CD8-positive, alpha-beta T cell (primary cell): ENCODE measurements at regions of chr4 and their contacts with region 1.

Region 1: DNA sequence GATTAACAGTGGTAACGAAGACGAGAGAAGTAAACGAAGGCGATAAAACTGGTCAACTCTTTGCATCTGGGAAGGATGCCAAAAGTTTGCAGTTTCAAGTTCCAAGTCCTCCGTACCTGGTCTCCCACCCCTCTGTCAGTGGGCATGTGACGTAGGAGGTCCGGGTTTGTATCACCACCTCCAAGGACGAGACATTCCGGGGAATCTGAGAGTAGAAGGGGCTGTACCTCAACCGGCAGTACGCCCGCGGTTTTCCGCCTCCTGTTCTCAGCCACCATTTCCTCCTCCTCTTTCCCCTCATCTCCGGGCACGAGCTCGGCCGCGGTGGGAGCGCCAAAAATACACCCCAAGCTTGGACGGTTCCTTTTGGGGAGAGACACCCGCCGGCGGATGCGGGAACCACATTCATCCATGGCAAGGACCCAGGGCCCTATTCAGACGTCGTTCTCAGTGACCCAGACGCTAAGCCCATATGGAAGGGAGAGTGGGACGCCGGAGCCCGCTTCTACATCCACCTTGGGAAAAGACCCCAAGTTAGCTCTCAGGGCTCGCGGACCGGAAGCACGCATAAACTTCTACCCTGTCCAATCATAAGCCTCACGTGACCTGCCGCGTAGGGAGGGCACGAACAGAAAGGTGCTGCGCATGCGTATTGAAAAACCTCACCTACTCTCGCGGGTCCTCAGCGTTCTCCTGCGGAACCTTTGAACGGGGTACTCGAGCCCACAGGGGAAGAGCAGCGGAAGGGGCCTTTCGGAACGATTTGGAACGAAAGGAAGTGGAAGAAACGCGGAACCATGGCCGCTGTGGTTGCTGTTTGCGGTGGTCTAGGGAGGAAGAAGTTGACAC is at the starts of genes HELQ and MRPS18C:
- DNase-seq: peak; percentile 89 to 100 (median 92)
- ATAC-seq: peak; percentile 86
- H3K4me3 ChIP-seq: peak within 1 kb of the TSS; percentile 62 to 91
- H3K4me3 Mint-ChIP-seq: peak within 1 kb of the TSS; percentile 100
- H3K27ac ChIP-seq: peak within 1 kb of the TSS; percentile 99
- H3K27ac Mint-ChIP-seq: peak within 1 kb of the TSS; percentile 100
- H3K4me1 ChIP-seq: peaks cover 27% of the 10 kb centered on the region
- H3K4me1 Mint-ChIP-seq: peaks cover 65% of the 10 kb centered on the region
- H3K27me3 ChIP-seq: no peaks in the 10 kb centered on the region
- H3K27me3 Mint-ChIP-seq: no peaks in the 10 kb centered on the region
- CTCF ChIP-seq: no peak
- total RNA-seq, gene HELQ: 25.6 to 28.0 TPM
- total RNA-seq, gene MRPS18C: 17.7 to 24.1 TPM

Region 2: GRCh38 chr4:82284858-82285805 is 1170.4 kb before region 1 on chr4:
- CTCF ChIA-PET with region 1: no interaction called
- POLR2A ChIA-PET with region 1: no interaction called
- intact Hi-C with region 1: loop called in 1 of 2 experiments (anchors 10 kb)
- DNase-seq: peak; percentile 98 to 99 (median 99)
- ATAC-seq: peak; percentile 91
- H3K4me3 ChIP-seq: peak overlapping the region; percentile 57 to 63
- H3K4me3 Mint-ChIP-seq: peak overlapping the region; percentile 88
- H3K27ac ChIP-seq: peak overlapping the region; percentile 43 to 68
- H3K27ac Mint-ChIP-seq: peak overlapping the region; percentile 41
- H3K4me1 ChIP-seq: peaks cover 12% of the 10 kb centered on the region
- H3K4me1 Mint-ChIP-seq: peaks cover 15% of the 10 kb centered on the region
- H3K27me3 ChIP-seq: peaks cover 0 to 5% of the 10 kb centered on the region in 2 experiments
- H3K27me3 Mint-ChIP-seq: no peaks in the 10 kb centered on the region
- CTCF ChIP-seq: peak; percentile 97

Region 3: DNA sequence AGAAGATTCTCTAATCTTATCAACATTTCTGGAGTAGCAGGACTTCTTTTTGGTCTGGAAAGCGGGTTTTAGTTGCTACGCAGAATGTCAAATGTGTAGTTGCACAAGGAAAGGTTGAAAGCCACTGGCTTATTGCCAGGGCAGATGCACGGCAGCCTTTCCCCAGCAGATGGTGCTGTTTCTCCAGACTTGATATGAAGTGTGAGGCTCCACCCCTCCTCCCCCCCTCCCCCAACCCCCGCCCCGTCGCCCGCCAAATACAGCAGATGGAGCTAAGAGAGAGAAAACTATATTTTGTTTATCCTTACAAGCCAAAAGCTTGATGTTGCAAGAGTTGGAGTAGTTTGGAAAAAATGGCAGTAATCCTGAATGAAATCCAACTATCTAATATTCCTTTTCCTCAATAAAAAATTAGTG is 993.1 kb before region 1 on chr4:
- CTCF ChIA-PET with region 1: no interaction called
- POLR2A ChIA-PET with region 1: no interaction called
- intact Hi-C with region 1: loop called in 1 of 2 experiments (anchors 10 kb)
- DNase-seq: peak; percentile 68 to 88 (median 84)
- ATAC-seq: peak; percentile 98
- H3K4me3 ChIP-seq: no peak overlapping the region
- H3K4me3 Mint-ChIP-seq: no peak overlapping the region
- H3K27ac ChIP-seq: no peak overlapping the region
- H3K27ac Mint-ChIP-seq: peak overlapping the region; percentile 20
- H3K4me1 ChIP-seq: peaks cover 3% of the 10 kb centered on the region
- H3K4me1 Mint-ChIP-seq: peaks cover 3% of the 10 kb centered on the region
- H3K27me3 ChIP-seq: no peaks in the 10 kb centered on the region
- H3K27me3 Mint-ChIP-seq: no peaks in the 10 kb centered on the region
- CTCF ChIP-seq: peak; percentile 79

Region 4: DNA sequence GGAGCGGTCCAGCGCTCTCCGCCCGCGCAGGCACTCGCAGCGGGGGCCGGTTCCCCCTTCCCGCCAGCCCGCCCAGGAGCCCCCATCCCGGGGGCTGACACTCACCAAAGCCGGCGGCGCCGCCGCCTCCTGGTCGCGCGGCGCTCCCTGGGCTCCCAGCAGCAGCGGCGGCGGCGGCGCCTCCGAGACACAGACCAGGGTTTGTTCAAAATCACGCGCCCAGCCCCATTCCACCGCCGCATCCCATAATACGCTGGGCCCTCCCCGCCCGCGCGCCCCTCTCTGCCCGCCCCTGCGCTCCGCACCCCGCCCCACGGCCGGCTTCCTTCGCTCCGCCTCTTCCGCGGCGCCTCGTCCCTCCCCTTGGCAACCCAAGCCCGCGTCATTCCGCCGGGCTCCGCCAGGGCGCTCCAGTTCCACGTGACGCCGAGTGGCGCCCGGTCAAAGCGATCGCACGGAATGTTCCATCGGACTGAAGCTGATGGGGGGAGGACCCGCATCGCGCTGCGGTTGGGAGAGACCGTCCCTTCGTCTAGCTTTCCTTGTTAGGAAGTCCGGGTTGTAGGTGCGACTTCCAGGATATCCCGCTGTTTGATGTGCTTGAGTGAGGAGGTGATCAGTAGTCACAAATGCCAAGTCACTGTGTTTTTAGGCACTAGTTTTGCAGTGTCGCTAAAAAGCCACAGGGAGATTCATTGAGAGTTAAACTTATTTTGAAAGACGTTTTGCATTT is 442.7 kb before region 1 on chr4:
- CTCF ChIA-PET with region 1: no interaction called
- POLR2A ChIA-PET with region 1: interaction called, 10 read pairs
- intact Hi-C with region 1: loop called (anchors 1 to 2 kb)
- DNase-seq: peak; percentile 94 to 98 (median 96)
- ATAC-seq: peak; percentile 88
- H3K4me3 ChIP-seq: peak overlapping the region; percentile 54 to 69
- H3K4me3 Mint-ChIP-seq: peak overlapping the region; percentile 90
- H3K27ac ChIP-seq: peak overlapping the region; percentile 56 to 95
- H3K27ac Mint-ChIP-seq: peak overlapping the region; percentile 91
- H3K4me1 ChIP-seq: peaks cover 31% of the 10 kb centered on the region
- H3K4me1 Mint-ChIP-seq: peaks cover 40% of the 10 kb centered on the region
- H3K27me3 ChIP-seq: no peaks in the 10 kb centered on the region
- H3K27me3 Mint-ChIP-seq: no peaks in the 10 kb centered on the region
- CTCF ChIP-seq: peak; percentile 65

Region 5: GRCh38 chr4:83217721-83218522 is 237.6 kb before region 1 on chr4:
- CTCF ChIA-PET with region 1: no interaction called
- POLR2A ChIA-PET with region 1: no interaction called
- intact Hi-C with region 1: loop called in 1 of 2 experiments (anchors 10 kb)
- DNase-seq: peak; percentile 35 to 94 (median 67)
- ATAC-seq: peak; percentile 93
- H3K4me3 ChIP-seq: no peak overlapping the region
- H3K4me3 Mint-ChIP-seq: peak overlapping the region; percentile 55
- H3K27ac ChIP-seq: peak overlapping the region; percentile 68 to 81
- H3K27ac Mint-ChIP-seq: peak overlapping the region; percentile 89
- H3K4me1 ChIP-seq: peaks cover 66% of the 10 kb centered on the region
- H3K4me1 Mint-ChIP-seq: peaks cover 74% of the 10 kb centered on the region
- H3K27me3 ChIP-seq: no peaks in the 10 kb centered on the region
- H3K27me3 Mint-ChIP-seq: no peaks in the 10 kb centered on the region
- CTCF ChIP-seq: no peak

Region 6: GRCh38 chr4:83473423-83473822 is 17.9 kb after region 1 on chr4:
- CTCF ChIA-PET with region 1: no interaction called
- POLR2A ChIA-PET with region 1: no interaction called
- intact Hi-C with region 1: no loop called
- DNase-seq: no peak
- ATAC-seq: no peak
- H3K4me3 ChIP-seq: no peak overlapping the region
- H3K4me3 Mint-ChIP-seq: no peak overlapping the region
- H3K27ac ChIP-seq: no peak overlapping the region
- H3K27ac Mint-ChIP-seq: no peak overlapping the region
- H3K4me1 ChIP-seq: no peaks in the 10 kb centered on the region
- H3K4me1 Mint-ChIP-seq: peaks cover 2% of the 10 kb centered on the region
- H3K27me3 ChIP-seq: no peaks in the 10 kb centered on the region
- H3K27me3 Mint-ChIP-seq: no peaks in the 10 kb centered on the region
- CTCF ChIP-seq: no peak

Region 7: GRCh38 chr4:83484500-83485461 is 29.3 kb after region 1 on chr4 and contains the start of gene ABRAXAS1:
- CTCF ChIA-PET with region 1: interaction called, 5 read pairs
- POLR2A ChIA-PET with region 1: interaction called, 20 read pairs
- intact Hi-C with region 1: loop called (anchors 1 kb)
- DNase-seq: peak; percentile 89 to 97 (median 94)
- ATAC-seq: peak; percentile 95
- H3K4me3 ChIP-seq: peak within 1 kb of the TSS; percentile 77 to 81
- H3K4me3 Mint-ChIP-seq: peak within 1 kb of the TSS; percentile 96
- H3K27ac ChIP-seq: peak within 1 kb of the TSS; percentile 71 to 72
- H3K27ac Mint-ChIP-seq: peak within 1 kb of the TSS; percentile 96
- H3K4me1 ChIP-seq: peaks cover 10% of the 10 kb centered on the region
- H3K4me1 Mint-ChIP-seq: peaks cover 35% of the 10 kb centered on the region
- H3K27me3 ChIP-seq: no peaks in the 10 kb centered on the region
- H3K27me3 Mint-ChIP-seq: no peaks in the 10 kb centered on the region
- CTCF ChIP-seq: no peak
- total RNA-seq, gene ABRAXAS1: 13.9 to 17.2 TPM